ENCODE measurements at regions of chr1 and their contacts with region 1.

Region 1: GRCh38 chr1:228478912-228479711 is 8.1 kb upstream of the RNF187 start:
- DNase-seq: no peak
- H3K4me3 Mint-ChIP-seq: no peak overlapping the region
- H3K27ac Mint-ChIP-seq: peak overlapping the region; percentile 88
- H3K4me1 Mint-ChIP-seq: peaks cover 34% of the 10 kb centered on the region
- H3K27me3 Mint-ChIP-seq: peaks cover 2% of the 10 kb centered on the region

Region 2: GRCh38 chr1:228393248-228393699 is 85.8 kb before region 1 on chr1:
- CTCF ChIA-PET with region 1: no interaction called
- POLR2A ChIA-PET with region 1: no interaction called
- DNase-seq: no peak
- H3K4me3 Mint-ChIP-seq: no peak overlapping the region
- H3K27ac Mint-ChIP-seq: no peak overlapping the region
- H3K4me1 Mint-ChIP-seq: peaks cover 16% of the 10 kb centered on the region
- H3K27me3 Mint-ChIP-seq: no peaks in the 10 kb centered on the region

Region 3: GRCh38 chr1:228464487-228464983 is 14.6 kb before region 1 on chr1:
- CTCF ChIA-PET with region 1: interaction called, 26 read pairs
- POLR2A ChIA-PET with region 1: interaction called, 10 read pairs
- DNase-seq: peak; percentile 96
- H3K4me3 Mint-ChIP-seq: peak overlapping the region; percentile 95
- H3K27ac Mint-ChIP-seq: peak overlapping the region; percentile 93
- H3K4me1 Mint-ChIP-seq: peaks cover 66% of the 10 kb centered on the region
- H3K27me3 Mint-ChIP-seq: peaks cover 10% of the 10 kb centered on the region

Region 4: DNA sequence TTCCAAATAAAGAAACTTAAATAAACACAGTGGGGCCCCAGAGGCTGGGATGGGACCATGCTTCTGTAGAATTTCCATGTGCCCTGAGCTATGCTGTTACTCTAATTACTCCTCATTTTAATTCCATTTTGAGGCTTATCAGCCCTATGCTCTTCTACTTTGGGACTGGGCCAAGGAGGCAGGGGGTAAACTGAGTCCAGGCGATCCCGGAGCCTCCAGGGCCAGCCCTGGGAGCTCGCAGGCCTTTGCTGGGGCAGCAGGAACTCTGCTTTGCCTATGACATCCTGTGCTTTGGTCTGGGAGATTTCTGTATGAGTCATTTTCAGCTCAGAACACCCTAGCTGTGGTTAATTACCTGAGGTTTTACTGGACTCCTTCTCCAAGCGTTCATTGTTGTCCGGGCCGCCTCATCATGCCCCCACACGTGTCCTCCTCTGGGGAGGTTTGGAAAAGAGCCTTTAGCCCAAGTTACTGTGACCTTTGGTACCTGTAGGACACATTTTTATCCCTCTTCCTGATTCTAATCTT is 351.9 kb after region 1 on chr1:
- CTCF ChIA-PET with region 1: no interaction called
- POLR2A ChIA-PET with region 1: no interaction called
- DNase-seq: no peak
- H3K4me3 Mint-ChIP-seq: no peak overlapping the region
- H3K27ac Mint-ChIP-seq: peak overlapping the region; percentile 33
- H3K4me1 Mint-ChIP-seq: peaks cover 44% of the 10 kb centered on the region
- H3K27me3 Mint-ChIP-seq: no peaks in the 10 kb centered on the region